Activated CD4-positive, alpha-beta memory T cell treated with anti-CD3 and anti-CD28 coated beads for 36 hours (primary cell): ENCODE measurements at regions of chr11 and their contacts with region 1.

Region 1: GRCh38 chr11:111938687-111939160 is 1.6 kb downstream of the DIXDC1 start:
- DNase-seq: peak; percentile 72
- H3K4me3 Mint-ChIP-seq: peak overlapping the region; percentile 77
- H3K27ac Mint-ChIP-seq: peak overlapping the region; percentile 88
- H3K4me1 Mint-ChIP-seq: peaks cover 55% of the 10 kb centered on the region
- H3K27me3 Mint-ChIP-seq: no peaks in the 10 kb centered on the region

Region 2: DNA sequence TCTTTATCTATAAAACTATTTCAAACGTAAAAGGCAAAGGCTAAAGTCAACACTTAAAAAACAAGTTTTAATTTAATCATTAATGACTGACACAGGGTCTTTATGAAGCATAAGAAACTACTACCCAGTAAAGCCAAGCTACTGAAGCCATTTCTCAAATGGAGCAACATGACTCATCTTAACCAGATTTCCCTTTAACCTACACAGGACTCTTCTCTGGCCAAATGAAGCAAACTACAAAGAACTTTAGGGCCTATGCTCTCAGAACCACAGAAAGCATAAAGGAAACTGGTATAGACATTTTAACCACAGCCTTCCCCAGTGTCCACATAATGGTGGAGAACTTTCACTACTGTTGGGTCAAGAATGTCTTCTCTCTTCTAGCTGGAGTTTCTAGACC is 102.0 kb before region 1 on chr11:
- CTCF ChIA-PET with region 1: no interaction called
- POLR2A ChIA-PET with region 1: no interaction called
- intact Hi-C with region 1: no loop called
- DNase-seq: no peak
- H3K4me3 Mint-ChIP-seq: no peak overlapping the region
- H3K27ac Mint-ChIP-seq: no peak overlapping the region
- H3K4me1 Mint-ChIP-seq: peaks cover 11% of the 10 kb centered on the region
- H3K27me3 Mint-ChIP-seq: no peaks in the 10 kb centered on the region

Region 3: GRCh38 chr11:111926505-111927391 is 12.0 kb before region 1 on chr11:
- CTCF ChIA-PET with region 1: interaction called, 15 read pairs
- POLR2A ChIA-PET with region 1: interaction called, 23 read pairs
- intact Hi-C with region 1: loop called (anchors 1 kb)
- DNase-seq: peak; percentile 98
- H3K4me3 Mint-ChIP-seq: peak overlapping the region; percentile 84
- H3K27ac Mint-ChIP-seq: peak overlapping the region; percentile 86
- H3K4me1 Mint-ChIP-seq: peaks cover 13% of the 10 kb centered on the region
- H3K27me3 Mint-ChIP-seq: no peaks in the 10 kb centered on the region

Region 4: DNA sequence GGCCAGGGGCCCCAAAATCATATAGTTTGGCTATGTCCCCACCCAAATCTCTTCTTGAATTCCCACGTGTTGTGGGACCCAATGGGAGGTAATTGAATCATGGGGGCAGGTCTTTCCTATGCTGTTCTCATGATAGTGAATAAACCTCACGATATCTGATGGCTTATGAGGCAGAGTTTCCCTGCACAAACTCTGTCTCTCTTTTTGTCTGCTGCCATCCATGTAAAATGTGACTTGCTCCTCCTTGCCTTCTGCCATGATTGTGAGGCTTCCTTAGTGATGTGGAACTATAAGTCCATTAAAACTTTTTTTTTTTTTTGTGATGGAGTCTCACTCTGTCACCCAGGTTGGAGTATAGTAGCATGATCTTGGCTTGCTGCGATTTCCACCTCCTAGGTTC is 12.8 kb after region 1 on chr11:
- CTCF ChIA-PET with region 1: no interaction called
- POLR2A ChIA-PET with region 1: no interaction called
- intact Hi-C with region 1: no loop called
- DNase-seq: no peak
- H3K4me3 Mint-ChIP-seq: no peak overlapping the region
- H3K27ac Mint-ChIP-seq: no peak overlapping the region
- H3K4me1 Mint-ChIP-seq: peaks cover 10% of the 10 kb centered on the region
- H3K27me3 Mint-ChIP-seq: no peaks in the 10 kb centered on the region

Region 5: GRCh38 chr11:112024773-112025678 is 86.3 kb after region 1 on chr11 and contains the start of gene DLAT:
- CTCF ChIA-PET with region 1: interaction called, 4 read pairs
- POLR2A ChIA-PET with region 1: no interaction called
- intact Hi-C with region 1: loop called (anchors 2 kb)
- DNase-seq: peak; percentile 92
- H3K4me3 Mint-ChIP-seq: peak within 1 kb of the TSS; percentile 98
- H3K27ac Mint-ChIP-seq: peak within 1 kb of the TSS; percentile 98
- H3K4me1 Mint-ChIP-seq: peaks cover 21% of the 10 kb centered on the region
- H3K27me3 Mint-ChIP-seq: no peaks in the 10 kb centered on the region
- total RNA-seq, gene DLAT: 36.4 to 39.0 TPM

Region 6: GRCh38 chr11:112074026-112074811 is 135.5 kb after region 1 on chr11 and contains the start of gene NKAPD1:
- CTCF ChIA-PET with region 1: no interaction called
- POLR2A ChIA-PET with region 1: interaction called, 3 read pairs
- intact Hi-C with region 1: loop called (anchors 5 kb)
- DNase-seq: peak; percentile 87
- H3K4me3 Mint-ChIP-seq: peak within 1 kb of the TSS; percentile 93
- H3K27ac Mint-ChIP-seq: peak within 1 kb of the TSS; percentile 94
- H3K4me1 Mint-ChIP-seq: peaks cover 29% of the 10 kb centered on the region
- H3K27me3 Mint-ChIP-seq: peaks cover 1% of the 10 kb centered on the region
- total RNA-seq, gene NKAPD1: 17.5 to 19.4 TPM

Region 7: DNA sequence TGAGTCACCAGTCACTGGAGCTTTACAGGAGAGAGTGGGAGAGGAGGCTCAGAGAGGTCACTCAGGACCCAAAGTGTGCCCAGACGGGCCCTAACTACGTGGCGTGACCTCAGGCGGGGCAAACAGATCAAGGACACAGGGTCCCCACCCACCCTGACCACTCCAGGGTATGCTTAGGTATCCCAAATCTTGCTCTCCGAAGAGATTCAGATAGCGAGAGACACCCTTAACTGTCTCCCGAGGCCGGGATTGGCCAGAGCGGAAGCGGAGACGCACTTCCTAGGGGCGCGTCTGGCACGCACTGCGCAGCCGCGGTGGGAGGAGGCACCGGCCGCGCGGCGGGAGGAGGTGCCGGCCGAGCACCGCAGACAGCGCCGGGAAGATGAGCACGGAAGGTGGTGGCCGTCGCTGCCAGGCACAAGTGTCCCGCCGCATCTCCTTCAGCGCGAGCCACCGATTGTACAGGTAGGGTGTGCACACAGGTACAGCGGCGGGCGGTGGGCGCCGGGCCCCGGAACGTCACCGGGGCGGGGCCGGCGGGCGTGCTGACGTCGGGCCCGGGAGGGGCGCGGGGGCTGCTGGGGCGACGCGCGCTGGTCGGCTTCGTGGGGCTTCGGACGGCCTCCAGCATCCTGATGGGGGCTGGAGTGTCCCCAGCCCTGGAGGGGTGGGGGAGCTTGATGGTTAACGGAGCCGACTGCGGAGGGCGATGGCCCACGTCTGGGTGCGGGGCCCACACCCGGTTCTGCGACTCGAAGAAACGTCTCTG is 287.5 kb after region 1 on chr11 and contains the start of gene PTS:
- CTCF ChIA-PET with region 1: no interaction called
- POLR2A ChIA-PET with region 1: no interaction called
- intact Hi-C with region 1: loop called (anchors 5 kb)
- DNase-seq: peak; percentile 90
- H3K4me3 Mint-ChIP-seq: peak within 1 kb of the TSS; percentile 86
- H3K27ac Mint-ChIP-seq: peak within 1 kb of the TSS; percentile 92
- H3K4me1 Mint-ChIP-seq: peaks cover 21% of the 10 kb centered on the region
- H3K27me3 Mint-ChIP-seq: no peaks in the 10 kb centered on the region
- total RNA-seq, gene PTS: 28.1 to 28.5 TPM

Region 8: DNA sequence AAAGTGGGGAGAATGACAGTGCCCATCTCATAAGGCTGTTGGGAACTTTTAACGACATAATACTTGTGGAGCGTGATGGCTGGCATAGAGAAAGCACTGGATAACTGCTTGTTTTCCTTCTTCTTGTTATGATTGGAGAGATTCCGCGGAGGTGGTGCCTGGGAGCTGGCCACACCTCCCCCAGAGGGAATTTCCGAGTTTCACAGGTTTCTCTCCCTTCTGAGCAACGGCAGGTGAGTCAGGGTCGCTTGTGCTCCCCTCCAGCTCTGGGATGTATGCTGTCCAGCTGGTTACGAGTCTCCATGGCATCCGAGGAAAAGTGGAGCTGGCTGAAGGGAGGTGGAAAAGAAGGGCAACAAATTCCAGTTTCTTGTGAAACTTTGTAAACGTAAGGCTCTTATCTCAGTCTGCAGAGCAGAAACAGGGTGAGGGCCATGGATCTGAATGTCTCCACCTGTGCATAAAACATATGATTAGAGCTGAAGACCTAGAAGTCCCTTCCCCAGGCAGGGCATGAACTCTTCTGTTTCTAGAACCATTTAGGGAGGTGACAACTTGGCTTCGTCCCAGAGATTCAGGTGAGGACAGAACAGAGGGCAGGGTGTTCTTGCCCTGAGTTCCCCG is 331.9 kb after region 1 on chr11:
- CTCF ChIA-PET with region 1: no interaction called
- POLR2A ChIA-PET with region 1: no interaction called
- intact Hi-C with region 1: no loop called
- DNase-seq: no peak
- H3K4me3 Mint-ChIP-seq: no peak overlapping the region
- H3K27ac Mint-ChIP-seq: no peak overlapping the region
- H3K4me1 Mint-ChIP-seq: no peaks in the 10 kb centered on the region
- H3K27me3 Mint-ChIP-seq: no peaks in the 10 kb centered on the region